Calu3 (cell line): ENCODE measurements at regions of chr7 and their contacts with region 1.

Region 1: GRCh38 chr7:44200647-44201461 is at the start of gene YKT6:
- DNase-seq: peak; percentile 98
- H3K4me3 Mint-ChIP-seq: peak within 1 kb of the TSS; percentile 74
- H3K27ac Mint-ChIP-seq: peak within 1 kb of the TSS; percentile 3
- H3K4me1 Mint-ChIP-seq: peaks cover 18% of the 10 kb centered on the region
- H3K27me3 Mint-ChIP-seq: peaks cover 20% of the 10 kb centered on the region
- CTCF ChIP-seq: peak; percentile 73
- total RNA-seq, gene YKT6: 139 and 146 TPM in 2 replicates

Region 2: GRCh38 chr7:44044315-44045225 is 156.3 kb before region 1 on chr7 and contains the start of gene DBNL:
- CTCF ChIA-PET with region 1: interaction called, 10 read pairs
- intact Hi-C with region 1: no loop called
- DNase-seq: peak; percentile 100
- H3K4me3 Mint-ChIP-seq: peak within 1 kb of the TSS; percentile 84
- H3K27ac Mint-ChIP-seq: peak within 1 kb of the TSS; percentile 57
- H3K4me1 Mint-ChIP-seq: peaks cover 59% of the 10 kb centered on the region
- H3K27me3 Mint-ChIP-seq: no peaks in the 10 kb centered on the region
- CTCF ChIP-seq: no peak
- total RNA-seq, gene DBNL: 164 and 180 TPM in 2 replicates

Region 3: GRCh38 chr7:44072364-44073231 is 128.3 kb before region 1 on chr7:
- CTCF ChIA-PET with region 1: interaction called, 3 read pairs
- intact Hi-C with region 1: loop called (anchors 1 kb)
- DNase-seq: peak; percentile 96
- H3K4me3 Mint-ChIP-seq: peak overlapping the region; percentile 10
- H3K27ac Mint-ChIP-seq: peak overlapping the region; percentile 70
- H3K4me1 Mint-ChIP-seq: peaks cover 32% of the 10 kb centered on the region
- H3K27me3 Mint-ChIP-seq: no peaks in the 10 kb centered on the region
- CTCF ChIP-seq: peak; percentile 97

Region 4: GRCh38 chr7:44131173-44132029 is 69.5 kb before region 1 on chr7:
- CTCF ChIA-PET with region 1: no interaction called
- intact Hi-C with region 1: loop called (anchors 5 kb)
- DNase-seq: no peak
- H3K4me3 Mint-ChIP-seq: no peak overlapping the region
- H3K27ac Mint-ChIP-seq: no peak overlapping the region
- H3K4me1 Mint-ChIP-seq: peaks cover 7% of the 10 kb centered on the region
- H3K27me3 Mint-ChIP-seq: peaks cover 72% of the 10 kb centered on the region
- CTCF ChIP-seq: no peak